Activated CD4-positive, alpha-beta memory T cell treated with anti-CD3 and anti-CD28 coated beads, Interleukin-2, amount 10 ng/mL, durations not matched to agents 7 days and 5 days (primary cell): ENCODE measurements at regions of chr16 and their contacts with region 1.

Region 1: GRCh38 chr16:25051406-25052150 is 36.4 kb upstream of the ARHGAP17 start:
- DNase-seq: no peak
- H3K4me3 Mint-ChIP-seq: peak overlapping the region; percentile 51
- H3K27ac Mint-ChIP-seq: peak overlapping the region; percentile 52
- H3K4me1 Mint-ChIP-seq: peaks cover 53% of the 10 kb centered on the region
- H3K27me3 Mint-ChIP-seq: no peaks in the 10 kb centered on the region

Region 2: DNA sequence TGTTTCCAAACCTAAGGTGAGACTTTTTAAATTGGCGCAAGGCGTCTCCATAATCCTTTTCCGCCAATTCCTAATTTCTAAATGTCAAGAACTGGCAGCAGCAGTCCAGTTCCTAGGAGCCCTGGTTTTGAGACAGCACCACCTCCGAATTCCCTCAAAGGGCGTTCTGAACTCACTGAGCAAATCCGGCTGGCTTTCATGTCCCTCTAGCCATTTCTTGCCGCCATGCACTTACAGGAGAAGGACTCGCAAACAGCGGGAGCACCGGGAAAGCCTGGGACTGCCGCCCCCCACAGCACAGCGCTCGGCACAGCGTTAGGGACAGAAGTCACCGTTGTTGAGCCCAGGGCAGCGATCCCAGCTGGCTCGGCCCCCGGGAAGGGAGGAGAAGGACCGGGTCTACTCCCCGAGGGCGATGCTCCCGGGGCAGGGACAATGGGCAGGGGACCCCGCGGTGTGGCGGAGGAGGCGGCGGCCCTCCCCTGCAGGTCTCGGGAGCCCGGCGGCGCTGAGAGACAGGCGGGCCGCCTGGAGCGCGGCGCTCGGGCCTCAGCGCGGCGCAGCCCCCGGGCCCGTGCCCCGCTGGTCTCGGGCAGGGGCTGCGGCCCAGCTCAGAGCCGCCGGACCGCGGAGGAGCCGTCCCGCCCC is 37.0 kb before region 1 on chr16:
- CTCF ChIA-PET with region 1: interaction called, 6 read pairs
- POLR2A ChIA-PET with region 1: interaction called, 94 read pairs
- DNase-seq: peak; percentile 24
- H3K4me3 Mint-ChIP-seq: peak overlapping the region; percentile 96
- H3K27ac Mint-ChIP-seq: peak overlapping the region; percentile 90
- H3K4me1 Mint-ChIP-seq: peaks cover 72% of the 10 kb centered on the region
- H3K27me3 Mint-ChIP-seq: no peaks in the 10 kb centered on the region

Region 3: GRCh38 chr16:25031441-25032307 is 19.9 kb before region 1 on chr16:
- CTCF ChIA-PET with region 1: interaction called, 6 read pairs
- POLR2A ChIA-PET with region 1: interaction called, 75 read pairs
- DNase-seq: peak; percentile 93
- H3K4me3 Mint-ChIP-seq: peak overlapping the region; percentile 84
- H3K27ac Mint-ChIP-seq: peak overlapping the region; percentile 90
- H3K4me1 Mint-ChIP-seq: peaks cover 30% of the 10 kb centered on the region
- H3K27me3 Mint-ChIP-seq: no peaks in the 10 kb centered on the region

Region 4: GRCh38 chr16:25066747-25067631 is 15.4 kb after region 1 on chr16:
- CTCF ChIA-PET with region 1: interaction called, 5 read pairs
- POLR2A ChIA-PET with region 1: interaction called, 53 read pairs
- DNase-seq: peak; percentile 89
- H3K4me3 Mint-ChIP-seq: peak overlapping the region; percentile 87
- H3K27ac Mint-ChIP-seq: peak overlapping the region; percentile 78
- H3K4me1 Mint-ChIP-seq: peaks cover 41% of the 10 kb centered on the region
- H3K27me3 Mint-ChIP-seq: peaks cover 8% of the 10 kb centered on the region

Region 5: GRCh38 chr16:25257504-25257955 is 206.0 kb after region 1 on chr16 and contains the start of gene ZKSCAN2:
- CTCF ChIA-PET with region 1: no interaction called
- POLR2A ChIA-PET with region 1: interaction called, 19 read pairs
- DNase-seq: peak; percentile 90
- H3K4me3 Mint-ChIP-seq: peak within 1 kb of the TSS; percentile 90
- H3K27ac Mint-ChIP-seq: peak within 1 kb of the TSS; percentile 93
- H3K4me1 Mint-ChIP-seq: peaks cover 65% of the 10 kb centered on the region
- H3K27me3 Mint-ChIP-seq: no peaks in the 10 kb centered on the region
- total RNA-seq, gene ZKSCAN2: 4.1 to 4.3 TPM